Activated CD4-positive, alpha-beta memory T cell treated with anti-CD3 and anti-CD28 coated beads, Interleukin-2, amount 10 ng/mL, durations not matched to agents 7 days and 5 days (primary cell): ENCODE measurements at regions of chr6 and their contacts with region 1.

Region 1: DNA sequence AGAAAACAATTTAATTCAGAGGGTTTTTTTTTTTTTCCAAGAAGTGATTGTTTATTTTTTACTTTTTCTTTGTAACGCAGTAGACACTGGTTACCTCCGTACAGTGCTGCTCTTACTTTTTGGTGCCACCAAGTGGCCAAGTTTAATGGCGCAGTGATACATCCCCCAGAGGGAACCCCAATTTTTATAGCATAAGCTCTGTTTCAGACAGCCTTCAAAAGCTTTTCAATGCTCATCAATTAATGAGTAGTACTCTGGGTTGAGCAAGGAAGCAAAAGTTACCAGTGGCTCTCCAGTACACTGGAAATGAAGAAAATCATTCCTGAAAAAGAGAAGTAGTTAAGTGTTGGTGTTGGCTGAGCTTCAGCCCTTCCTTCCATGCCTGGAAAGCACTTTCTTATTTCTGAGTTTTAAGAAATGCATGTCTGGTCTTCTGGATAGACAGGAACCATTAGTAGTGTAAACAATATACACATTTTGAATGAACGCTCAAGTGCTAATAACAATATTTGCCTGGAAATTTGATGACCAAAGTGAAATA is 129.1 kb upstream of the SMLR1 start:
- DNase-seq: peak; percentile 79
- H3K4me3 Mint-ChIP-seq: peak overlapping the region; percentile 33
- H3K27ac Mint-ChIP-seq: no peak overlapping the region
- H3K4me1 Mint-ChIP-seq: peaks cover 39% of the 10 kb centered on the region
- H3K27me3 Mint-ChIP-seq: no peaks in the 10 kb centered on the region

Region 2: GRCh38 chr6:130047088-130047995 is 650.7 kb before region 1 on chr6:
- CTCF ChIA-PET with region 1: interaction called, 11 read pairs
- POLR2A ChIA-PET with region 1: no interaction called
- DNase-seq: no peak
- H3K4me3 Mint-ChIP-seq: no peak overlapping the region
- H3K27ac Mint-ChIP-seq: no peak overlapping the region
- H3K4me1 Mint-ChIP-seq: no peaks in the 10 kb centered on the region
- H3K27me3 Mint-ChIP-seq: no peaks in the 10 kb centered on the region

Region 3: DNA sequence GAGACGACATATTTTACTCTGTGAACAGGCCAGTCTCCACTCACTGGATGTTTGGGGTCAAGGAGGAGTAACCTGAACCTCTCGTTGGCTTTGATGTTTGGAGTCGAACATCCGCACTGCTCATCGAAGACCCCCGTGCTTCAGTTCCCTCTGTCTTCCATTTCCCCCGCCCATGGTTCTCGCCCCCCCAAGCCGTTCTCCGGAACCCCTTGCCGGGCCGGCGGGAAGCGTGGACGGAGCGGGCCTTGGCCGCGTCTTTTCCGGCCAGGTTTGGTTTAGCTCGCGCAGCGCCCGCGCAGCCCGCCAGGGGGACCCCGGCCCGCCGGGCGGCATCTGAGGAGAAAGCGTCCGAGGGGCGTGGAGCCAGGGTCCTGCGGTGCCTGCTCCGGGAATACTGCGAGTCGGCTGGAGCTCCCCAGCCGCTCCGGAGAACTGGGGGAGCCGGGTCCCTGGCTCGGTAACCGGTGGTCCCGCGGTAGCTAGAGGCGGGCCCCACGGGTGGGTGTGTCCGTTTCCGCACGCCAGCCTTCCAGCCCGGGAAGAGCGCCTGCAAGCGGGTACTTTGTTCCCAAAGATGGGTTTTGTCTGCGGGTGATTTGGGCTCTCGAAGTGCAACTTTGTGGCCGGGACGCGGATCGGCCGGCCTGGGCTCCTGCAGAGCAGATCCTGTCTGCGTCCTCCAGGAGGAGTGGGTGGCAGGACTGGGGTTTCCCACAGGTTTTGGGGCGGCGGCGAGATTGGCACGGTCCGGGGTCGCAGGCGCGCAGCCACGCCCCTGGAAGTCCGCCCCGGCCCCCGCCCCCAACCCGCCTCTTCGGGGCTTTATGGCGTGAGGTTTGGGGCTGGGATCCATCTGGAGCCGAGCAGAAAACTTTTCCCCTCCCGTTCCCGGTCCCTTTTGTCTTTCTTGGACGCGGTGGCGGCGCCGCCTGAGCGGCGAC is 332.6 kb before region 1 on chr6 and contains the start of gene TMEM200A:
- CTCF ChIA-PET with region 1: interaction called, 22 read pairs
- POLR2A ChIA-PET with region 1: no interaction called
- DNase-seq: peak; percentile 54
- H3K4me3 Mint-ChIP-seq: peak within 1 kb of the TSS; percentile 74
- H3K27ac Mint-ChIP-seq: peak within 1 kb of the TSS; percentile 23
- H3K4me1 Mint-ChIP-seq: peaks cover 21% of the 10 kb centered on the region
- H3K27me3 Mint-ChIP-seq: peaks cover 27% of the 10 kb centered on the region
- total RNA-seq, gene TMEM200A: 3.0 TPM

Region 4: GRCh38 chr6:130575971-130576370 is 122.1 kb before region 1 on chr6:
- CTCF ChIA-PET with region 1: interaction called, 15 read pairs
- POLR2A ChIA-PET with region 1: interaction called, 4 read pairs
- DNase-seq: peak; percentile 86
- H3K4me3 Mint-ChIP-seq: peak overlapping the region; percentile 31
- H3K27ac Mint-ChIP-seq: peak overlapping the region; percentile 82
- H3K4me1 Mint-ChIP-seq: peaks cover 40% of the 10 kb centered on the region
- H3K27me3 Mint-ChIP-seq: no peaks in the 10 kb centered on the region

Region 5: DNA sequence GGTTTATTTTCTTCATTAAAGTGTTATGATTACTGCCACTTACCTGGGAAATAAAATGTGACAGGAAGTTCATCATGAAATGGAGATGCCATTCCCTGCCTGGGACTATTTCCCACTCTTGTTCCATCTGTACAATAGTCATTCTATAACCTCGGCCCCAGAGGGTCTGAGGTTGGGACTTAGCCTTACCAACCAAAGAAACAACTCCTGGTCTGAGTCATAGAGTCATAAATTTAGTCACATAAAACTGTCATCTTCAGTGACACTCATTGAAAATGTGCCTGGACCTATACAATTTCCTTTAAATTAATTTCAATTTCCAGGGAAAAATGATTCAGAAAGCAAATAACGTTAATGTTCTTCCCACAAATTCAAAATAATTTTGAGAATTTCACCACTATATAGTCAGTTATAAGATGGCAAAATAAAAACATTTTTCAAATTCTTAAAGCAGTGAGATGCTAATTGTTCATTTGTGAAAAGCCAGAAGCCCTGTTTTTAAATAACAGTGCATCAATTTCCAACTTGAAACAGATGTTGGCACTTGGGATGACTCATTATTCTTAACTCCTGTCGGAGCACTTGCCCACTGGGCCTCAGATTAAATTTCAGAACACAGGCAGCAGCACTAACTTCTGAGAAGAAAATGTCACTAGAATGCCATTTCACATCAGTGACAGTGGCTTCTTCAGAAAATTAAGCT is 72.1 kb before region 1 on chr6:
- CTCF ChIA-PET with region 1: no interaction called
- POLR2A ChIA-PET with region 1: no interaction called
- DNase-seq: peak; percentile 30
- H3K4me3 Mint-ChIP-seq: peak overlapping the region; percentile 6
- H3K27ac Mint-ChIP-seq: peak overlapping the region; percentile 68
- H3K4me1 Mint-ChIP-seq: peaks cover 41% of the 10 kb centered on the region
- H3K27me3 Mint-ChIP-seq: no peaks in the 10 kb centered on the region

Region 6: DNA sequence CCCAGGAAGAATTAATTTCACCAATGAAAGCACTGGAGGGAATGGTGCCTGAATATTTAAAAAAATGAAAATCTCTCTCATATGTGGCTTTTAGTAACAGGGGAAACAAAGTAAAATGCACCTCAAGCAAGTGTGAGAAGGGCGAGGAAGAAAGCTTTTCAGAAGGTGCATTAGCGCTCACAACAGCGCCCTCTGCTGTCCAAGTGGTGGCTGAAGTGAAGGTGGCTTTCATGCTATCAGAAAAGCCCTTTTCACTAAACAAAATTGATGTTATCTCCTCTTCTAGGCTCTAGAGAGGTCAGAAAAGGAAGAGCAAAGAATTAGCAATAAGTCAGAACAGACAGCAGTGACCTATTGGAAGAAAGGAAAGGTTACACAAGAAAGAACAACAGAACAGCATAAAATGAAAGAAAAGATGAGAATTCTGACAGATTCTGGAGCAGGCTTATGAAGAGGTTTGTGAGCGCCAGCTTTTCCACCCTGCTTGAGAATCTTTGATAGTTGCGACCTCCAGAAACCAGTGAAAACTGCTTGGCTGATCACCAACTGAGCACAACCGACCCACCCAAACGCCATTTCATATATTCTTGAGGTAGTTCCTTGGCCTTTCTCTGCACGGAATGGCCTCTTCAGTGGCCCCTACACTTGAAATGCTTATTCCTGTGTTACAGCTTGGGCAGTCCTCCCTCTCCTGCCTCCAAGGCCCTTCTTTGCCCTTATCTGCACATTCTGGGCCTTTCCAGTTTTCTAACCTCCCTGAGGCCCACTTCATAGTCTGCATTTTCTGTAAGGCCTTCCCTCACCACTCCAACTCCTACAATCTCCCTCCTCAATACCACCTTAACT is 174.4 kb after region 1 on chr6:
- CTCF ChIA-PET with region 1: interaction called, 17 read pairs
- POLR2A ChIA-PET with region 1: no interaction called
- DNase-seq: peak; percentile 76
- H3K4me3 Mint-ChIP-seq: no peak overlapping the region
- H3K27ac Mint-ChIP-seq: no peak overlapping the region
- H3K4me1 Mint-ChIP-seq: peaks cover 11% of the 10 kb centered on the region
- H3K27me3 Mint-ChIP-seq: no peaks in the 10 kb centered on the region